Right cardiac atrium (tissue), 5 donors: ENCODE measurements at regions of chr3 and their contacts with region 1.

Region 1: DNA sequence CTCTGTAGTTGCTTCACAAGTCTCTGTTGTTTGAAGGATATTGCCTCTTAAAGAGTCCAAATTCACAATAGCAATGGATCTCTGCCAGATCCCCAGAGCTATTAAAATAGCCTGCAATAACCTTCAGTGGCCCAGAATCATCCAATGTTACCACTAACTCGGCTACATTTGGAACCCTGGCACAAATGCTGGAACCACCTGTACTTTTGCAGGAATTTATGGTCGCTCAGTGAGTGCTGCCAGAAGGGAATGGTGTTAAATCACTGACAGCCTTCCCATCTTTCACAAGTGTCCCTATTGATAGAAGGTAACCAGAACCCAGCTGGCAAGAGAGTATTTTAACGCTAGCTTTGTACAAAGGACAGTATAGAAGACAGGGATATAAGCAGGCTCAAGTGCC is 298.8 kb upstream of the PLSCR5 start:
- DNase-seq: peak; percentile 13 to 52 (median 23)
- ATAC-seq: peak; percentile 90 to 97
- H3K4me3 ChIP-seq: no peak overlapping the region
- H3K27ac ChIP-seq: no peak overlapping the region
- H3K4me1 ChIP-seq: no peaks in the 10 kb centered on the region
- H3K27me3 ChIP-seq: no peaks in the 10 kb centered on the region

Region 2: DNA sequence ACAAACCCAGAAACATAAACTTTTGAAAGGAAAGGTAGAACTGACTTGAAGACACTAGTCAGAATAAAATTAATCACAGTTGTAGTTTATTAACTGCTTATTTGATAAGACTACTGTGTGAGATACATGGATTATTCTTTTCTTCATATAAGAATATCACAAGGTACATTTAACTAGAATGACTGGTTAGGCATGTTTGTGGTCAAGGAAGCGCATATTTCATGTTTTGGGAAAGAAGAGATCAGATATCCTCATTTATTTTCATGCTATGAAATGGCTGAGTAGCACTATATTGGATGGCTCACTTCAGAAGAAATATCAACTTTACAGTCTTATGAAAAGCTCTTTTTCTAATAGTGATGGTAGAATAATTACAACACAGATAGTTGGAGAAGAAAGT is 76.5 kb before region 1 on chr3:
- intact Hi-C with region 1: loop called in 1 of 4 experiments (anchors 10 kb)
- DNase-seq: no peak
- ATAC-seq: no peak
- H3K4me3 ChIP-seq: no peak overlapping the region
- H3K27ac ChIP-seq: no peak overlapping the region
- H3K4me1 ChIP-seq: no peaks in the 10 kb centered on the region
- H3K27me3 ChIP-seq: no peaks in the 10 kb centered on the region